ENCODE measurements at regions of chr4 and their contacts with region 1.

Region 1: GRCh38 chr4:159487284-159487747 is 384.4 kb downstream of the RAPGEF2 start:
- DNase-seq: peak; percentile 85
- H3K4me3 Mint-ChIP-seq: peak overlapping the region; percentile 24
- H3K27ac Mint-ChIP-seq: no peak overlapping the region
- H3K4me1 Mint-ChIP-seq: peaks cover 25% of the 10 kb centered on the region
- H3K27me3 Mint-ChIP-seq: peaks cover 10% of the 10 kb centered on the region
- CTCF ChIP-seq: peak; percentile 63

Region 2: DNA sequence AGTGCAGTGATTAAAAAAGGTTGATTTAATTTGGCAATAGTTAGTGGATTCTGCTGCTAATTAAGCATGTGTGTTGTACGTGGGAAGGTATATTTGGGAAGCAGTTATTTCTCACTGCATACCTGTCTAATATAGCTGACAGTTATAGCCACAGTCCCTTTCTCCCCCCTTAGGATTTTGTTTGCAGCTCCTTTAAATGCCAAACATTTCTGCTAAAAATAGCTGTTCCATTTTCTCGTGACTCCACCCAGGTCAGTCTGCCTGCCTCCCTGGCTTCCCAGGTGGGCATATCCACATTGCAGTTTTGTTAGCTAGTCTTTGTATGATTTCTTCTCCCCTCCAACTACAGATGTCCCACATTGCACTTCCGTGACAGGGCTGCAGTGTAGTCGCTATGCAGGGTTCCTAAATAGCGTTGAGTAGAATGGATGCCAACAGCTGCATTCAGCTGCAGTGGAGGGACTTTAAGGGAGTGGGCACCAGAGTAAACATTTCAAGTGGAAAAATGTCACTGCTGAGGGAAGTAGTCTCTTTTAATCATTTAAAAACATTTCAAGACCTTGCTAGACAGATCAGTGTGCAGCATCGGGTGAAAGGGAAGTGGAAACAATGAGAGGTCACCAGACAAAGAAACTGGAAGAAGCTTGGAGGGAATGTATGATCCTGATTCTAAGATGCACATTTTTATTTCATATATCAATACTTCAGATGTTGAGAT is 58.2 kb before region 1 on chr4:
- CTCF ChIA-PET with region 1: no interaction called
- POLR2A ChIA-PET with region 1: no interaction called
- intact Hi-C with region 1: no loop called
- DNase-seq: no peak
- H3K4me3 Mint-ChIP-seq: no peak overlapping the region
- H3K27ac Mint-ChIP-seq: no peak overlapping the region
- H3K4me1 Mint-ChIP-seq: no peaks in the 10 kb centered on the region
- H3K27me3 Mint-ChIP-seq: no peaks in the 10 kb centered on the region
- CTCF ChIP-seq: no peak

Region 3: DNA sequence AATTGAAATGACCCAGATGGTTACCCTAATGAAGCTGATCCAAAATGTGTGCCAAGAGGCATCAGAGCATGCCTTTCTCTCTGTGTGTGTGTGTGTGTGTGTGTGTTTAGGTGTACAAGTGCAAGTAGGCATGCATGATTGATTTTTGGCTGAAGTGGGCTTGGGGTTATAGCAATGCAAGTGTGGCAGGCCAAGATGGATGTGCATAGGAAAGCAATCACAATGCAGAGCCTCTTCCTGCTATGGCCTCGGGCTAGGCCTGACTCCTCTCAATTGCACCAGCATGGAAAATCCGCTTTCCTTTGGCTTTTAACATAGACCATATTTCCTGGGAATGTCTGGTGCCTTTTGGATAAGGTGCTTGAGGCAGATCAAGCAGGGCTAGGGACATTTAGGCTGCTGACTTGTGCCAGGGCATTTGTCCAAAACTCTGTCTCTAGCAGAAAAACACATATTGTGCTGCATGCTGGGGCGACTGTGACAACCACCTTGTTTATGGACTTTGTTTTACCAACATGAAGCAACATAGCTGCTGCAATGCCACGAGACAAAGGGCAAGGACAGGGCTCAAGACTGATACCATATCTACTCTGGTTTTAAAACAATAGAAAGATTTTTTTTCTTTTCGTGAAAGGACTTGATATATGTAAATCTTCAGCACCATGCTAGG is 11.3 kb after region 1 on chr4:
- CTCF ChIA-PET with region 1: interaction called, 29 read pairs
- POLR2A ChIA-PET with region 1: no interaction called
- intact Hi-C with region 1: no loop called
- DNase-seq: no peak
- H3K4me3 Mint-ChIP-seq: no peak overlapping the region
- H3K27ac Mint-ChIP-seq: no peak overlapping the region
- H3K4me1 Mint-ChIP-seq: no peaks in the 10 kb centered on the region
- H3K27me3 Mint-ChIP-seq: no peaks in the 10 kb centered on the region
- CTCF ChIP-seq: no peak

Region 4: DNA sequence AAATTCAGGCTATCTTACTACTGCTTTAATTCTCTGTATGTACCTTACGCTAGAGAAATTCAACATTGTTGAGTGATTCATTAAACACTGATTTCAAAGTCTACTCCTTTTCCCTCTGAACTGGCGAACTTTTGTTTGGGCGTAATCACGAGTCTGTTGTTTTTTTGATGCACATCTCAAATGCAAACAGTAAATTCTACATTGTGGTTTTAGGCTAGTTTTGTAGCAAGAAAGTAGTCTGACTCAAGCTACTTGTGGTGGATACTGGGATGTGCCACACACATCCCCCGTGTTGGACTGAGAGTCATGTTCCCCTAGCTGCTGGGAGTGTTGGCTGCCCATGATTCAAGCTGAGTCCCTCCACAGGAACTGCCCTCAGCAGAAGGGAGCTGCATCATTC is 21.7 kb after region 1 on chr4:
- CTCF ChIA-PET with region 1: interaction called, 14 read pairs
- POLR2A ChIA-PET with region 1: interaction called, 3 read pairs
- intact Hi-C with region 1: no loop called
- DNase-seq: peak; percentile 30
- H3K4me3 Mint-ChIP-seq: no peak overlapping the region
- H3K27ac Mint-ChIP-seq: no peak overlapping the region
- H3K4me1 Mint-ChIP-seq: peaks cover 13% of the 10 kb centered on the region
- H3K27me3 Mint-ChIP-seq: no peaks in the 10 kb centered on the region
- CTCF ChIP-seq: no peak

Region 5: DNA sequence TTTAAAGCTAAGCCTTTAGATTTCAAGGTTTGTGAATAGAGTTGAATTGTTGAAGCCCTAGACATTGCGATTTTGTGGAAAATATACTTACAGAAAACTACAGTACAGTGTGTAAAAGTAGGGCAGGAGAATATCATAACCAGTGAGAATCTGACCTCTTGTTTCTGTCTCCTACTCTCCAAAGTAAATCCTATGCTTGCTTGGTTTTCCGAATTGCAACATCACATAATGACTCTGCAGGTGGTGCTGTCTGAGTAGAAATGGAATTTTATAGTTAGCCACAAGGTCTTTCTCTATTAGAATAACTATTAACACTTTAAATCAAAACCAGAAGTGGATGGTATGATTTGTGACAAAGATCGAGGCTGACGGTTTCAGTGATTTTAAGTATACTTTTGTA is 121.1 kb after region 1 on chr4:
- CTCF ChIA-PET with region 1: interaction called, 4 read pairs
- POLR2A ChIA-PET with region 1: no interaction called
- intact Hi-C with region 1: loop called (anchors 5 kb)
- DNase-seq: peak; percentile 57
- H3K4me3 Mint-ChIP-seq: no peak overlapping the region
- H3K27ac Mint-ChIP-seq: no peak overlapping the region
- H3K4me1 Mint-ChIP-seq: peaks cover 14% of the 10 kb centered on the region
- H3K27me3 Mint-ChIP-seq: no peaks in the 10 kb centered on the region
- CTCF ChIP-seq: peak; percentile 34

Region 6: GRCh38 chr4:159764343-159764952 is 277.1 kb after region 1 on chr4:
- CTCF ChIA-PET with region 1: interaction called, 17 read pairs
- POLR2A ChIA-PET with region 1: no interaction called
- intact Hi-C with region 1: loop called (anchors 5 kb)
- DNase-seq: peak; percentile 74
- H3K4me3 Mint-ChIP-seq: no peak overlapping the region
- H3K27ac Mint-ChIP-seq: no peak overlapping the region
- H3K4me1 Mint-ChIP-seq: no peaks in the 10 kb centered on the region
- H3K27me3 Mint-ChIP-seq: no peaks in the 10 kb centered on the region
- CTCF ChIP-seq: peak; percentile 56

Region 7: GRCh38 chr4:159946983-159947615 is 459.8 kb after region 1 on chr4:
- CTCF ChIA-PET with region 1: interaction called, 7 read pairs
- POLR2A ChIA-PET with region 1: no interaction called
- intact Hi-C with region 1: loop called (anchors 1 kb)
- DNase-seq: peak; percentile 77
- H3K4me3 Mint-ChIP-seq: no peak overlapping the region
- H3K27ac Mint-ChIP-seq: no peak overlapping the region
- H3K4me1 Mint-ChIP-seq: no peaks in the 10 kb centered on the region
- H3K27me3 Mint-ChIP-seq: no peaks in the 10 kb centered on the region
- CTCF ChIP-seq: peak; percentile 66

Measured in MCF 10A (cell line).